Colonic mucosa (tissue), 4 donors: ENCODE measurements at regions of chr3 and their contacts with region 1.

Region 1: DNA sequence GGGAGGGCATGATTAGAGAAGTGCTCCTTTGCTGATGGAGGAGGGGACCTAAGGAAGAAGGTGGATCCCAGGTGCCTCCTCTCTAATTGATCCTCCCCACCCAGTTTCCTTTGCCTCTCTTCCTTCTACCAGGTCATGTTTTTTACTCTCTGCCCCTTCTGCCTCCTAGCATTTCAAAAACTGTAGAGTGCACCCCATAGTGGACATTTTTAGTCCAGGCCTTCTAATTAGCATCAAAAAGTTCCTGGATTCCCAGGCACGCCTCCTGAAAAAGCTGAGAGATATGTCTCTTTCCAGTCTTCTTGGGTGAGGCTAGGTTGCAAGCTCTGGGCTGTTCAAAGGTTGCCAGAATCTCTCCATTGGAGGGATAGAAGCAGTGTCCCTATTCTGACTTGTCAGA is 18.7 kb upstream of the ITGB5 start:
- DNase-seq: no peak
- H3K4me3 ChIP-seq: no peak overlapping the region
- H3K27ac ChIP-seq: no peak overlapping the region
- H3K4me1 ChIP-seq: no peaks in the 10 kb centered on the region
- H3K27me3 ChIP-seq: no peaks in the 10 kb centered on the region
- CTCF ChIP-seq: no peak

Region 2: GRCh38 chr3:124761250-124761796 is 144.5 kb before region 1 on chr3:
- intact Hi-C with region 1: loop called (anchors 1 kb)
- DNase-seq: peak; percentile 89
- H3K4me3 ChIP-seq: no peak overlapping the region
- H3K27ac ChIP-seq: no peak overlapping the region
- H3K4me1 ChIP-seq: no peaks in the 10 kb centered on the region
- H3K27me3 ChIP-seq: no peaks in the 10 kb centered on the region
- CTCF ChIP-seq: peak; percentile 91

Region 3: GRCh38 chr3:124768812-124769211 is 137.0 kb before region 1 on chr3:
- intact Hi-C with region 1: loop called (anchors 2 kb)
- DNase-seq: peak; percentile 61
- H3K4me3 ChIP-seq: no peak overlapping the region
- H3K27ac ChIP-seq: no peak overlapping the region
- H3K4me1 ChIP-seq: no peaks in the 10 kb centered on the region
- H3K27me3 ChIP-seq: no peaks in the 10 kb centered on the region
- CTCF ChIP-seq: peak; percentile 33